ENCODE measurements at regions of chr19 and their contacts with region 1.

Region 1: GRCh38 chr19:45038931-45039893 is at the start of gene CLASRP:
- DNase-seq: peak; percentile 90 to 97 (median 96)
- H3K4me3 ChIP-seq: peak within 1 kb of the TSS; percentile 73 to 93 (median 89)
- H3K27ac ChIP-seq: peak within 1 kb of the TSS; percentile 91 to 95
- H3K4me1 ChIP-seq: peaks cover 7 to 16% (median 8%) of the 10 kb centered on the region in 3 donors
- H3K27me3 ChIP-seq: no peaks in the 10 kb centered on the region
- CTCF ChIP-seq: no peak
- total RNA-seq, gene CLASRP: 83.6 TPM

Region 2: GRCh38 chr19:44925114-44925891 is 113.9 kb before region 1 on chr19:
- intact Hi-C with region 1: no loop called
- DNase-seq: peak in 4 of 5 donors; percentile 23 to 95 (median 42)
- H3K4me3 ChIP-seq: no peak overlapping the region
- H3K27ac ChIP-seq: no peak overlapping the region
- H3K4me1 ChIP-seq: no peaks in the 10 kb centered on the region
- H3K27me3 ChIP-seq: no peaks in the 10 kb centered on the region
- CTCF ChIP-seq: no peak

Region 3: GRCh38 chr19:45187421-45188100 is 148.3 kb after region 1 on chr19:
- intact Hi-C with region 1: loop called (anchors 10 kb)
- DNase-seq: peak in 4 of 5 donors; percentile 49 to 79 (median 61)
- H3K4me3 ChIP-seq: no peak overlapping the region
- H3K27ac ChIP-seq: no peak overlapping the region
- H3K4me1 ChIP-seq: peaks cover 0 to 2% (median 0%) of the 10 kb centered on the region in 3 donors
- H3K27me3 ChIP-seq: no peaks in the 10 kb centered on the region
- CTCF ChIP-seq: peak; percentile 55